Activated CD4-positive, alpha-beta T cell treated with anti-CD3 and anti-CD28 coated beads, Interleukin-2, amount 10 ng/mL, durations not matched to agents 7 days and 5 days (primary cell): ENCODE measurements at regions of chr3 and their contacts with region 1.

Region 1: GRCh38 chr3:122318620-122319019 is 6.4 kb upstream of the CSTA start:
- DNase-seq: no peak
- H3K4me3 Mint-ChIP-seq: no peak overlapping the region
- H3K27ac Mint-ChIP-seq: no peak overlapping the region
- H3K4me1 Mint-ChIP-seq: peaks cover 23% of the 10 kb centered on the region
- H3K27me3 Mint-ChIP-seq: peaks cover 2% of the 10 kb centered on the region

Region 2: DNA sequence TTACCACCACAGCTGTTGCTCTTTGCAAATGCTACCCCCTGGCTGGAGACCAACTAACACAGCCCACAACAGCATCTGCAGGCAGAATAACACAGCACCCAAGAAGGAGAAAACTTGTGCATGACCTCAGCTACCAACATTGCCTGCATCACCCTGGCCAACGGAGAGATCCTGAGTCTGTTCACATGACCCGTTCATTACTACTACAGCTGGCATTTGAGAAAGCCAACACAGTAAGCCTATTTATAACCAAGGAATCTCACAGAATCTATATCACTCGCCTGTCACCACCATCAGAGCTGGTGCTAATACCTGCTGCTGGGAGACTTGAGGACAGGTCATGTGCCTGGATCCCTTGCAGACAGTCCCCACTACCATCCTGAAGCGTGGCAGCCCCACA is 988.0 kb before region 1 on chr3:
- CTCF ChIA-PET with region 1: no interaction called
- POLR2A ChIA-PET with region 1: no interaction called
- DNase-seq: no peak
- H3K4me3 Mint-ChIP-seq: no peak overlapping the region
- H3K27ac Mint-ChIP-seq: no peak overlapping the region
- H3K4me1 Mint-ChIP-seq: no peaks in the 10 kb centered on the region
- H3K27me3 Mint-ChIP-seq: peaks cover 8% of the 10 kb centered on the region

Region 3: DNA sequence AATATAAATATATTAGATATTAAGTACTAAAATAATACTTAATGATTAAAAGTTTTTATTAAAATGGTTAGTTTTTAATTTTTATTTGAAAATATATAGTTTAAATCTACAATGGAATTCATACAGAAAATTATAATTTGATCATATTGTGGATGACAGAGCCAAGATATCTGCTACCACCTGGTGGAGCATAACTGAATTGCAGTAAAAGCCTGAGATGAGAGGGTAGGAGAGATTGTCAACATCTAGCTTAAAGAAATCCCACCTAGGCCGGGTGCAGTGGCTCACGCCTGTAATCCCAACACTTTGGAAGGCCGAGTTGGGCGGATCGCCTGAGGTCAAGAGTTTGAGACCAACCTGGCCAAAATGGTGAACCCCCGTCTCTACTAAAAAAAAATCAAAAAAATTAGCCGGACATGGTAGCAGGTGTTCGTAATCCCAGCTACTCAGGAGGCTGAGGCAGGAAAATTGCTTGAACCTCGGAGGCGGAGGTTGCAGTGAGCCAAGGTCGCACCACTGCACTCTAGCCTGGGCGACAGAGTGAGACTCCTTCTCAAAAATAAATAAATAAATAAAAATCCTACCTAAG is 18.7 kb before region 1 on chr3:
- CTCF ChIA-PET with region 1: interaction called, 11 read pairs
- POLR2A ChIA-PET with region 1: no interaction called
- DNase-seq: peak; percentile 61
- H3K4me3 Mint-ChIP-seq: no peak overlapping the region
- H3K27ac Mint-ChIP-seq: no peak overlapping the region
- H3K4me1 Mint-ChIP-seq: peaks cover 23% of the 10 kb centered on the region
- H3K27me3 Mint-ChIP-seq: peaks cover 2% of the 10 kb centered on the region

Region 4: DNA sequence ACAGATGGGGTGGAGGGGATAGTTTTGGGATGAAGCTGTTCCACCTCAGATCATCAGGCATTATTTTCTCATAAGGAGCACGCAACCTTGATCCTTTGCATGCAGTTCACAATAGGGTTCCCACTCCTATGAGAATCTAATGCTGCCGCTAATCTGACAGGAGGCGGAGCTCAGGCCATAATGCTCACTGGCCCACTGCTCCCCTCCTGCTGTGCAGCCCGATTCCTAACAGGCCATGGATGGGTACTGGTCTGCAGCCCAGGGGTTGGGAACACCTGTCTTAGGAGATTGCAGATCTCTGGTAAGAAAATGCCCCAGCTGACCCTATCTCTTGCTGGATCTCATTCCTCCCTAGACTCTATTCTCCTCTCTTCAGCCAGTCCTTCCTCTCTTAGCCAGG is 13.3 kb after region 1 on chr3:
- CTCF ChIA-PET with region 1: no interaction called
- POLR2A ChIA-PET with region 1: no interaction called
- DNase-seq: no peak
- H3K4me3 Mint-ChIP-seq: no peak overlapping the region
- H3K27ac Mint-ChIP-seq: no peak overlapping the region
- H3K4me1 Mint-ChIP-seq: no peaks in the 10 kb centered on the region
- H3K27me3 Mint-ChIP-seq: peaks cover 30% of the 10 kb centered on the region